ENCODE measurements at regions of chr15 and their contacts with region 1.

Region 1: GRCh38 chr15:92831655-92832328 is 68.3 kb upstream of the CHD2 start:
- DNase-seq: peak; percentile 100
- H3K4me3 ChIP-seq: peak overlapping the region; percentile 64
- H3K27ac ChIP-seq: peak overlapping the region; percentile 99
- H3K4me1 ChIP-seq: peaks cover 72% of the 10 kb centered on the region
- CTCF ChIP-seq: no peak

Region 2: DNA sequence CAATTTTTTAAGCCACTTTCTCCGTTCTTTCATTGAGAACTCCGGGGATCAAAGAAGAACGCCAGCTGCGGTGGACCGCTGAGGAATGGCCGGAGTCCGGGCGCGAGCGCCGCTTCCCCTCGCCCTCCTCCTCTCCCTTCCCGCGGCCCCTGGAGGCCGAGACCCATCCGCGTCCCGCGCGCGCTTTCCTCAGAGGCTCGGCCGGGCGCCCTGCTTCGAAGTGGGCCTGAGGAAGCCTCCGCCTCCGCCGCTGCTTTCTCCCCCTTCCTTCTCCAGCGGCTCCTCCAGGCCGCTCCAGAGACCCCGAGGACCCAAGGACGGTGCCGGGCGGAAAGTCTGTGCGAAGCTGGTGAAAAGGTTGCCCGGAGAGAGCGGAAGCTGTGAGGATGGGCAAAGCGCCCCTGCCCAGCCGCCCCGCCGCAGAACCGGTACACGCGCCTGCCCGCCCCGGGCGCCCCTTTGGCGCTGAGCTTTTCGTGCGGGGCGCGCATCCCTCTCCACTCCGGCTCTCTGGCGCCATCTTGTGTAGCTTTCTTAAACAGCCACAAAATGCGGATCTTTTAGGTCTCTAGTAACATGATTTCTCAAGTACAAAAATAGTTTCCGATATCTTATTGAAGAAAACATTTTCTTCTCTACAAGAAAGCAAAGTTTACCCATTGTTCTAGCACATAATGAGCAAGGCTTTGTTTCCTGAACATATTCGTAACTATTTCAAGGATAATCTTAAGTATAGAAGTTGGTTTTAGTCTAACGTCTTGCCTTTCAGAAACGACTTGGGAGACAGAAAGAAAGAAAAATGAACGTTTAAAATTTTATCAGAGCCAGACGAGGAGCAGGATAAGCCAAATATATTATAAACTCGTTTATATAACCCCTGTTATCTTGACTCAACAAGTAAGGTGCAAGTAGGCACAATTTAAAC is 117.1 kb before region 1 on chr15:
- CTCF ChIA-PET with region 1: no interaction called
- POLR2A ChIA-PET with region 1: no interaction called
- intact Hi-C with region 1: no loop called
- DNase-seq: peak; percentile 54
- H3K4me3 ChIP-seq: no peak overlapping the region
- H3K27ac ChIP-seq: no peak overlapping the region
- H3K4me1 ChIP-seq: no peaks in the 10 kb centered on the region
- CTCF ChIP-seq: peak; percentile 90

Region 3: DNA sequence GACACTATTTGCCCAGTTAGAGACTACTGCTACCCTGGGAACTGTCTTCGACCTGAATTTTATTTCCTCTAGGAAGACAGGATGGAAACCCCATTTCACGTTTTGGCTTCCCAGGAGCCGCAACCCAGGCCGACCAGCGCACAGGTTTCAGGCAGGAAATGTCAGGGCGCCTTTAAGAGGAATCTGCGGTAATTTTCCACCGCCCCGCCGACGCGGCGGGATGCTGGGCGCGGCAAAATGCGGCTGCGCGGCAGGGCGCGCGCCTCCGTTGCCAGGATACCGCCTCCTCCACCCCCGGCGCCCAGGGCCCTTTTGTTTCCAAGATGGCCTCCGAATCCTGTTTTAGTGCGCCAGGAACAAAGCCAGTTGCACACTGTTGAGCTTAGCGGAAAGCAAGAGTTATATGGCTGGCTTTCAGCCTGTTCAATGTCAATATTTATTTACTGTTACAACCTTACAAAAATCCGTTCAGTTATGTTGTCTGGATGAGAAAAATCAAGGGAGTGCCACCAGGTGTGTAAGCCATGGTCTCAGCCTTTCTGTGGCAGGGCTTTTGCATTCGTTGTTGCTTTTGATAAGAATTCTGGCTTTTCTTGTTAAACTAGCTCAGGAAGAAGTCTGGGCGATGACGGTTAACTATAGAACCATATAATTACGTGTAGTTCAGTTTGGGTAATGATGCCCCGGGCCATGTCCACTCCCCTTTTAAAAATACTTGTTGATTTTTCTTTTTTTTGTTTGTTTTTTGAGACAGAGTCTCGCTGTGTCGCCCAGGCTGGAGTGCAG is 11.4 kb before region 1 on chr15:
- CTCF ChIA-PET with region 1: interaction called, 11 read pairs
- POLR2A ChIA-PET with region 1: interaction called, 205 read pairs
- intact Hi-C with region 1: loop called (anchors 1 kb)
- DNase-seq: peak; percentile 91
- H3K4me3 ChIP-seq: peak overlapping the region; percentile 58
- H3K27ac ChIP-seq: peak overlapping the region; percentile 71
- H3K4me1 ChIP-seq: peaks cover 74% of the 10 kb centered on the region
- CTCF ChIP-seq: no peak

Region 4: GRCh38 chr15:92845126-92845508 is 13.3 kb after region 1 on chr15:
- CTCF ChIA-PET with region 1: interaction called, 14 read pairs
- POLR2A ChIA-PET with region 1: interaction called, 16 read pairs
- intact Hi-C with region 1: no loop called
- DNase-seq: peak; percentile 73
- H3K4me3 ChIP-seq: peak overlapping the region; percentile 28
- H3K27ac ChIP-seq: peak overlapping the region; percentile 69
- H3K4me1 ChIP-seq: peaks cover 68% of the 10 kb centered on the region
- CTCF ChIP-seq: no peak

Region 5: DNA sequence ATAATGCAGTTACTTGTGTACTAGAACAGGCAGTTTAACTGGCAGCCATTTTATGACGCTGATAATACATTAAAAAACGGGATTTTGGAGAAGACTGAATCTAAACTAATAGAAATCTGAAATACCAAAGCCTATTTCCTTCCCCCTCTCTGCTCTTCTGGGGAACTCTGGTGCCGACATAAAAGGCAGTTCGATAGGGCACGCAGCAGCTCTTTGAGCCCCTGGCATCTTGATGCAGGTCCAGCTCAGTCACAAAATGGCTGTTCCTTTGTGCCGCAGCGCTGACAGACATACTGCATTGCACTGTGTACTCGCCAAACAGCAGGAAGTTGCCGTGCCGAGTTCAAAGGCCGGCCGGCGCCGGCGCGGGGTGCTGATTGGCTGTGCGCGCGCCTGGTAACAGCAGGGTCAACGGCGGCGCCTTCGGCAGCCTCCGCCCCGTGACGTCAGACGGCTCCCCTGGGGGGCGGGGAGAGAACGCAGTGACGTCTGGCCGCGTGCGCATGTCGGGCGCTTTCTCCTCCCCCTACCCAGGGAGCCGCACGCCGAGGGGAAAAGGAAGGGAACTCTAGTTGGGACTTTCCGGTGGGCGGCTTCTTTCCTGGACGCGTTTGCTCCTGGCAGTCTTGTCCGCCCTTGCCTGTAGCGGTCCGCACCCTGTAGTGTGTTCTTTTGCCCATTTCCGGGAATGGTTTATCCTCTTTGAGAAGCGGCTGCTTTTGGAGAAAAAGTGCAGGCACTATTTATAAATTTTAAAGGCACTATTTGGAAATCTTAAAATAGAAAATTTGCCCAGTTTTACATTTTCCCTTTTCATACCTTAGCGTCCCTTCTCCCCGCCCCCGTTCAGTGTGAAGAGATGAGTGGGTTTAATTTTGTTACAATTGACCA is 72.4 kb after region 1 on chr15:
- CTCF ChIA-PET with region 1: interaction called, 5 read pairs
- POLR2A ChIA-PET with region 1: interaction called, 121 read pairs
- intact Hi-C with region 1: loop called (anchors 1 kb)
- DNase-seq: peak; percentile 99
- H3K4me3 ChIP-seq: peak overlapping the region; percentile 92
- H3K27ac ChIP-seq: peak overlapping the region; percentile 94
- H3K4me1 ChIP-seq: peaks cover 47% of the 10 kb centered on the region
- CTCF ChIP-seq: no peak